Vagina (tissue), 2 donors: ENCODE measurements at regions of chr2 and their contacts with region 1.

Region 1: DNA sequence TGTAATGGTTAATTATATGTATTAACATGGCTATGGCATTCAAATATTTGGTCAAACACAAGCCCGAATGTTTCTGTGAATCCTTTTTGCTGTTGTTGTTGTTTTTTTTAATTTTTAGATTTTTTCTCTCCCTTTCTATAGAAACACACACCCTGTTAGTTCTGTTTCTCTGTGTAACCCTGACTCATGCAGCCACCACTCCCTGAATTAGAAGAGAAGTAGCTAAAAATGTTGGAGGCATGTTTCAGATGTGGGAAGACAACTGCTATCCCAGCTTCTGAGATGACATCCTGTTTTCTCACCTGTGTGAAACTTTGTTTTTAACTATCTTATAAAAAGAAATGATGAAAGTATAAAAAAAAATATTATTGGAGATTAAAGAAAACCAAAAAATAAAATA is 219.6 kb upstream of the RGPD4 start:
- DNase-seq: no peak
- H3K4me3 ChIP-seq: no peak overlapping the region
- H3K27ac ChIP-seq: no peak overlapping the region
- H3K4me1 ChIP-seq: no peaks in the 10 kb centered on the region
- H3K27me3 ChIP-seq: no peaks in the 10 kb centered on the region
- CTCF ChIP-seq: no peak
- POLR2A ChIP-seq: no peak

Region 2: DNA sequence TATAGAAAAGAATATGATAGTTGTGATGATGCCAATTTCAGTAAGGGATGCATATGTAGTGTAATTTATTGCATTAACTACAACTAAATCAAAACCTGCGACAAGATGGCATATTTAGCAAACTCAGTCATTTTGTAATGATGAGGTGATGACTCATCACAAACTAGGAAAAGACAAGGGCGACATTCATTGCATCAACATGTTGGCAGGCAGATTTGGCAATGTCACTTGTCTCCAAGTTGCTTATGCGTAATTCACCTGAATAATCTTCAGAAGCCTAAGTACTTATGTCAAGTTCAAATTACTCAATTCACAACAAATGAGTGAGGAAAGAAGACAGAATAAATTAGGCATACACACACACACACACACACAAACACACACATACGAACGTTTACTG is 53.5 kb before region 1 on chr2:
- intact Hi-C with region 1: no loop called
- DNase-seq: no peak
- H3K4me3 ChIP-seq: no peak overlapping the region
- H3K27ac ChIP-seq: no peak overlapping the region
- H3K4me1 ChIP-seq: no peaks in the 10 kb centered on the region
- H3K27me3 ChIP-seq: no peaks in the 10 kb centered on the region
- CTCF ChIP-seq: no peak
- POLR2A ChIP-seq: no peak

Region 3: GRCh38 chr2:107760620-107761364 is 153.7 kb after region 1 on chr2:
- intact Hi-C with region 1: no loop called
- DNase-seq: no peak
- H3K4me3 ChIP-seq: no peak overlapping the region
- H3K27ac ChIP-seq: no peak overlapping the region
- H3K4me1 ChIP-seq: no peaks in the 10 kb centered on the region
- H3K27me3 ChIP-seq: no peaks in the 10 kb centered on the region
- CTCF ChIP-seq: no peak
- POLR2A ChIP-seq: no peak

Region 4: DNA sequence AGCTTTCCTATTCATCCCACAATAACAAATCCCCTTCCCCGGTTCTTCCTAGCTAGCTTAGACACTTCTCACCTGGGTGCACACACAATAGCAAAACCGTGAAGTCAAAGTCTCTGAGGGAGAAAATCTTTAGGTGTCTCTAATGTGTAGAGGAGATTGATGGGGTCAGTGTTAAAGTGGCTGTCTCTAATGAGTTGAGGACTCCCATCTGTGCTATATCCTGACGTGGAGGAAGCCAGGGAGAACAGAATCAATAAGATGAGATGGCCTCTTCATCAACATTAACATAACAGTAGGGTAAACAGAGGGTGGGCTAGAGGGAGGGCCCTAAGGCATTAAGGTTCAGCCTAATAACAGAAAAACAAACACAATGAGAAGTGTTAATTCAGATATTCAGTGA is 499.7 kb after region 1 on chr2:
- intact Hi-C with region 1: loop called (anchors 10 kb)
- DNase-seq: no peak
- H3K4me3 ChIP-seq: no peak overlapping the region
- H3K27ac ChIP-seq: no peak overlapping the region
- H3K4me1 ChIP-seq: no peaks in the 10 kb centered on the region
- H3K27me3 ChIP-seq: no peaks in the 10 kb centered on the region
- CTCF ChIP-seq: no peak
- POLR2A ChIP-seq: no peak